T-cell (primary cell): ENCODE measurements at regions of chr13 and their contacts with region 1.

Region 1: GRCh38 chr13:99916366-99917103 is 55.0 kb downstream of the ZIC5 start:
- DNase-seq: peak in 6 of 35 experiments; percentile 4 to 71 (median 20)
- ATAC-seq: peak; percentile 71 to 84 (median 78)
- H3K4me3 ChIP-seq: no peak overlapping the region
- H3K4me3 Mint-ChIP-seq: no peak overlapping the region
- H3K27ac ChIP-seq: no peak overlapping the region
- H3K27ac Mint-ChIP-seq: no peak overlapping the region
- H3K4me1 ChIP-seq: peaks cover 0 to 15% of the 10 kb centered on the region in 2 experiments
- H3K4me1 Mint-ChIP-seq: peaks cover 10 to 25% (median 13%) of the 10 kb centered on the region in 3 donors
- H3K27me3 ChIP-seq: peaks cover 4 to 7% of the 10 kb centered on the region in 2 experiments
- H3K27me3 Mint-ChIP-seq: peaks cover 1 to 11% of the 10 kb centered on the region in 2 donors

Region 2: DNA sequence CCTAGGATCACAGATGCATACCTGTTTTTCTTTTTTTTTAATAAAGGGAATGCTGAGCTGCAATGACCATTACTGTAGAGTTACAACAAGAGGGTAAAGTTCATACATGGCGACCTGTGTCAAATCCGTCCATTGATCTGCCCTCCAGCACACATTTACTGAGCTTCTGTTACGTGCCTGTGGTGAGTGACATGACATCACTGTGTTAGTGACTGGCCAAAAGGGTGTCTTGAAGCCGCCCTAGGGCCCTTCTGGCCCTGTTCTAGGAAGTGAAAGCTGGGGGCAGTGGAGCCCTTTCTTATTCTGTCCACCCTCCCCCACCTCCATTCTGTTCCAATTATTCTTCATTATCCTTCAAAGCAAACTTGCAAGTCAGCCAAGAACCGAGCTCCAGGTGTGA is 11.3 kb before region 1 on chr13:
- CTCF ChIA-PET with region 1: interaction called, 3 to 16 read pairs
- POLR2A ChIA-PET with region 1: interaction called in 1 of 2 experiments, 7 read pairs
- DNase-seq: no peak
- ATAC-seq: no peak
- H3K4me3 ChIP-seq: no peak overlapping the region
- H3K4me3 Mint-ChIP-seq: no peak overlapping the region
- H3K27ac ChIP-seq: no peak overlapping the region
- H3K27ac Mint-ChIP-seq: no peak overlapping the region
- H3K4me1 ChIP-seq: peaks cover 0 to 3% of the 10 kb centered on the region in 2 experiments
- H3K4me1 Mint-ChIP-seq: peaks cover 0 to 3% (median 3%) of the 10 kb centered on the region in 3 donors
- H3K27me3 ChIP-seq: peaks cover 6 to 25% of the 10 kb centered on the region in 2 experiments
- H3K27me3 Mint-ChIP-seq: peaks cover 24 to 39% of the 10 kb centered on the region in 2 donors

Region 3: DNA sequence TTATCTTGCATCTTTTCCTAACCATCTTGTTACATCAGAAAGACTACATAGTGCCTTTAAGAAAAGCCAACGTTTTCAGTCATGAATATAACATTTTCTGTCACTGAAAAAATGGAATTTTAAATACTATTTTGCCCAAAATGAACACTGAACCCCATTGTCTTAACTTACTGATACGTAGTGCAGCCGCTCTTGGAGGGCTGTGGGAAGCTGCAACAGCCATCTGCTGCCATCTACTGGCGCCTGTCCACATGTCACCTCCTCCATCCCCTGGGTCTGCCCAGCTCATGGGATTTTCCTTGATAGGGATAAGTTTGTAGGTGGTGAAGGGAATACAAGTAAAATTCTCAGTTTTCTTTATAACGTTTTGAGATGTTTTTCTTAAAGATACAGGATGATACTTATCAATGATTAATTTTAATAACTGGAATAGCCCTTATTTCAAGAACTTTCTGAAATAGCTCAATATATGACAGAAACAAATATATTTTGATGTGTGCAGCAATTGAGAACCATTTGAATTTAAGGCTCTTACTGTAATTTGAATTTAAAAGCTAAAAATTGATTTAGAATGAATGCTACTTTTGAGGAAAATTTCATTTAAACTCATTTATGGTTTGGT is 598.4 kb after region 1 on chr13:
- CTCF ChIA-PET with region 1: interaction called, 5 to 11 read pairs
- POLR2A ChIA-PET with region 1: no interaction called
- DNase-seq: peak; percentile 31 to 85 (median 63)
- ATAC-seq: peak; percentile 88 to 96 (median 92)
- H3K4me3 ChIP-seq: no peak overlapping the region
- H3K4me3 Mint-ChIP-seq: no peak overlapping the region
- H3K27ac ChIP-seq: no peak overlapping the region
- H3K27ac Mint-ChIP-seq: no peak overlapping the region
- H3K4me1 ChIP-seq: peaks cover 0 to 2% of the 10 kb centered on the region in 2 experiments
- H3K4me1 Mint-ChIP-seq: peaks cover 4 to 17% (median 16%) of the 10 kb centered on the region in 3 donors
- H3K27me3 ChIP-seq: no peaks in the 10 kb centered on the region
- H3K27me3 Mint-ChIP-seq: no peaks in the 10 kb centered on the region

Region 4: GRCh38 chr13:100689191-100689590 is 772.7 kb after region 1 on chr13:
- CTCF ChIA-PET with region 1: no interaction called
- POLR2A ChIA-PET with region 1: no interaction called
- DNase-seq: no peak
- ATAC-seq: no peak
- H3K4me3 ChIP-seq: no peak overlapping the region
- H3K4me3 Mint-ChIP-seq: no peak overlapping the region
- H3K27ac ChIP-seq: no peak overlapping the region
- H3K27ac Mint-ChIP-seq: no peak overlapping the region
- H3K4me1 ChIP-seq: no peaks in the 10 kb centered on the region
- H3K4me1 Mint-ChIP-seq: no peaks in the 10 kb centered on the region
- H3K27me3 ChIP-seq: peaks cover 0 to 11% of the 10 kb centered on the region in 2 experiments
- H3K27me3 Mint-ChIP-seq: peaks cover 10 to 12% of the 10 kb centered on the region in 2 donors